Activated CD8-positive, alpha-beta memory T cell treated with anti-CD3 and anti-CD28 coated beads, Interleukin-2, amount 10 ng/mL, durations not matched to agents 7 days and 5 days (primary cell): ENCODE measurements at regions of chr12 and their contacts with region 1.

Region 1: DNA sequence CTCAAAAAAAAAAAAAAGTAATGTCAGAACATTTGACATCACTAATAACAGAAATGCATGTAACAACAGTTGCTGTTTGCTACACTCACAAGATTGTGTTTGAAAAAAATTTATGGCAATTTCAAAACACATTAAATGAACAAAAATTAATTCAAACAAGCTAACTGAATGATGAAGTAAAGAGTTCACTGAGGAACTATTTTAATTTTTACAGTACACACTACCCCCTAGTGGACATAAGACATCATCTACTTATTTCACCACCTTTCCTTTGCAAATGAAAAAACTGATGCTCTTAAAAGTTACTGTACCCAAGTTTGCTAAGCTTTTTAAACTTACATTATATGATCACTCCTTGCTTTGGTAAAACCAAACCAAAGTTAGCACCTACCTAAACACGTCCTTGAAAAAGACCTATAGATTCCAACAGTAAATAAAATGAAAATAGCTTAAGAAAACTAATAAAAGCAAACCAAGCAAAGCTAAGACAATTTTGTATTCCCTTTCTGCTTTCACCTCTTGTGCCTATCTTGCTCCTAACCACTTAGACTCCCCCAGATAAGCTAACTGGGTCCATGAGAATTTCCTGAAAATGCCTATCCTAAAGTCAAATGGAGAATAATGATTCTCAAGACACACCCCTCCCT is 22.2 kb downstream of the UBE2N start:
- DNase-seq: no peak
- ATAC-seq: peak; percentile 67
- H3K4me3 Mint-ChIP-seq: no peak overlapping the region
- H3K27ac Mint-ChIP-seq: no peak overlapping the region
- H3K4me1 Mint-ChIP-seq: peaks cover 77% of the 10 kb centered on the region
- H3K27me3 Mint-ChIP-seq: no peaks in the 10 kb centered on the region

Region 2: DNA sequence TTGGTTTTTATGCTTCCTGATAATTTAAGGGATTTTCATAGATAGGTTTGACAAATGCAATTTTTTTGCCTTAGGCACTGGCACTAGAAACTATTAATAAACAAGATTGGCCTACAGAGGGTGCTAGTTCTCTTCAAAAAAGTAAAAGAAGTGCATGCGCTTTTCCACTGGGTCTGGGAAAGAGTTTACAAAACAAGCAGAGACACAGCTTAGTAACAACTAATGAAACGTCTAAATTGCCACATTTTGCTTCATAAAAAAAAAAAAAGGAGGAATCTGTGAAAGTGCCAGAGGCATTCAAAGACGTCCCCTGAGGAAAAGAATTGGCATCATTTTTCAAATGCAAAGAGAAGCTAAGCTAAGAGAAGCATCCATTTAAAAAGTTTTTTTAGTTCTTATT is 432.1 kb before region 1 on chr12:
- CTCF ChIA-PET with region 1: interaction called, 22 read pairs
- DNase-seq: no peak
- ATAC-seq: peak; percentile 51
- H3K4me3 Mint-ChIP-seq: no peak overlapping the region
- H3K27ac Mint-ChIP-seq: peak overlapping the region; percentile 72
- H3K4me1 Mint-ChIP-seq: peaks cover 26% of the 10 kb centered on the region
- H3K27me3 Mint-ChIP-seq: peaks cover 8% of the 10 kb centered on the region

Region 3: GRCh38 chr12:93098077-93098476 is 321.4 kb before region 1 on chr12:
- CTCF ChIA-PET with region 1: interaction called, 10 read pairs
- DNase-seq: peak; percentile 77
- ATAC-seq: peak; percentile 67
- H3K4me3 Mint-ChIP-seq: no peak overlapping the region
- H3K27ac Mint-ChIP-seq: peak overlapping the region; percentile 2
- H3K4me1 Mint-ChIP-seq: peaks cover 16% of the 10 kb centered on the region
- H3K27me3 Mint-ChIP-seq: peaks cover 2% of the 10 kb centered on the region

Region 4: GRCh38 chr12:93397412-93397811 is 22.1 kb before region 1 on chr12:
- CTCF ChIA-PET with region 1: interaction called, 19 read pairs
- DNase-seq: no peak
- ATAC-seq: no peak
- H3K4me3 Mint-ChIP-seq: no peak overlapping the region
- H3K27ac Mint-ChIP-seq: no peak overlapping the region
- H3K4me1 Mint-ChIP-seq: peaks cover under 1% of the 10 kb centered on the region
- H3K27me3 Mint-ChIP-seq: no peaks in the 10 kb centered on the region

Region 5: DNA sequence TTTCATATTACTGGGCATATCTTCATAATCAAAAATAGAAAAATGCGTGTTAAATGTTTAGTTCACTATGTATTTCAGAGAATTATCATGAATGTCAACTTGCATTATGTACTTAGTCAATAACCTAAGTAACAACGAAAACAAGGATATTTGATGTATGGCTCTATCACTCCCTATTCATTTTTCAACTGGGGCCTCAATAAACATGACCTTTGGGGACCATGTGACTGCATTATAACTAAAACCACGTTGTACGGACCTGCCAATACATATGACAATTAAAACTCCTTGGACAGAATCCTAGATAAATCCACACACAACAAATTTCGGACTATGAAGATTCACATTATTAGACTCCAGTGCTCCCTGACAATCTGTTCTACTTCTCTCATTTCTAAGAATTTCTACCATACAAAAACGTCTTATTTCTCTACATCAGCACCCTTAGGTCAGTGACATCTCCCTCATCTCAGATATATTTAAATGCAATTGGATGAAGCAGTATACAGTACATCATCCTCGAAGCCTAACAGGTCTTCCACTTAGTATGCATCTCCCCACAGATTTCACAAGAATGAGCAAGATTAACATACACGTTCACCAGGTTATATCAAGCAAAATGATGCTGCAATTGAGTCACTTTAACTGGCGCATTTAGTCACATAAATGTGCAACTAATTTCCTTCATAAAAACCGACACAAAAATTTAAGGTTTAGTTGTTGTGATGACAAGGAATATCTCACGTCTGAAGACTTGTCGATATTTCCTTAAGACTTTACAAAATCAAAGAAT is 20.7 kb after region 1 on chr12:
- CTCF ChIA-PET with region 1: interaction called, 52 read pairs
- DNase-seq: no peak
- ATAC-seq: no peak
- H3K4me3 Mint-ChIP-seq: peak overlapping the region; percentile 97
- H3K27ac Mint-ChIP-seq: peak overlapping the region; percentile 97
- H3K4me1 Mint-ChIP-seq: peaks cover 59% of the 10 kb centered on the region
- H3K27me3 Mint-ChIP-seq: no peaks in the 10 kb centered on the region